ENCODE measurements at regions of chr9 and their contacts with region 1.

Region 1: DNA sequence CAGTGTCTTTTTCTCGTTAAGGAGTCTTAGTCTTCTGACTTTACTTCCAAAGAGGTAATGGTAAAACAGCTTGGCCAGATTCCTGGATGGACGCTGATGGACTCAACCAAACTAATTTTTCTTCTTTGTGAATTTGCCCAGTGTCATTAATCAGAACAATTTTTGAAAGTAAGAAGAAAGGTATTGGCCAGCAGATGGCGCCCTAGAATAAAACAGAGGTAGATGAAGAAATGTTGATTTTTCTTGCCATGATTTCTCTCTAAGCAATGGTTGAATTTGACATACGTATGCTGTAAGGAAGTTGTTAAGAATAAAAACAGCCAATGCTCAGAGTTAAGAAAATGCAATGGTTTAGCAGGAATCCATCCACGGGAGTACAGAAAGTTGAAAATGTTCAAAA is 500.0 kb downstream of the DIRAS2 start:
- DNase-seq: no peak
- H3K4me3 ChIP-seq: no peak overlapping the region
- H3K27ac ChIP-seq: no peak overlapping the region
- H3K4me1 ChIP-seq: peaks cover 0 to 5% (median 0%) of the 10 kb centered on the region in 3 donors
- H3K27me3 ChIP-seq: peaks cover 0 to 7% (median 0%) of the 10 kb centered on the region in 4 donors
- CTCF ChIP-seq: peak in 5 of 6 experiments; percentile 19 to 58 (median 53)
- POLR2A ChIP-seq: no peak

Region 2: GRCh38 chr9:89732295-89732938 is 410.2 kb before region 1 on chr9:
- intact Hi-C with region 1: no loop called
- DNase-seq: no peak
- H3K4me3 ChIP-seq: no peak overlapping the region
- H3K27ac ChIP-seq: no peak overlapping the region
- H3K4me1 ChIP-seq: peaks cover 0 to 17% (median 0%) of the 10 kb centered on the region in 3 donors
- H3K27me3 ChIP-seq: peaks cover 0 to 4% (median 0%) of the 10 kb centered on the region in 4 donors
- CTCF ChIP-seq: no peak
- POLR2A ChIP-seq: no peak

Region 3: GRCh38 chr9:90870621-90871326 is 728.2 kb after region 1 on chr9:
- intact Hi-C with region 1: loop called (anchors 10 kb)
- DNase-seq: no peak
- H3K4me3 ChIP-seq: no peak overlapping the region
- H3K27ac ChIP-seq: no peak overlapping the region
- H3K4me1 ChIP-seq: peaks cover 0 to 17% (median 9%) of the 10 kb centered on the region in 3 donors
- H3K27me3 ChIP-seq: no peaks in the 10 kb centered on the region
- CTCF ChIP-seq: peak; percentile 60 to 85 (median 78)
- POLR2A ChIP-seq: no peak